Activated CD4-positive, alpha-beta T cell treated with anti-CD3 and anti-CD28 coated beads for 36 hours (primary cell): ENCODE measurements at regions of chr10 and their contacts with region 1.

Region 1: GRCh38 chr10:73810735-73811465 is 498 bp downstream of the NDST2 start:
- DNase-seq: peak; percentile 72
- ATAC-seq: peak; percentile 22
- H3K4me3 Mint-ChIP-seq: peak overlapping the region; percentile 78
- H3K27ac Mint-ChIP-seq: peak overlapping the region; percentile 91
- H3K4me1 Mint-ChIP-seq: peaks cover 42% of the 10 kb centered on the region
- H3K27me3 Mint-ChIP-seq: no peaks in the 10 kb centered on the region

Region 2: GRCh38 chr10:72875250-72876055 is 935.4 kb before region 1 on chr10:
- CTCF ChIA-PET with region 1: no interaction called
- POLR2A ChIA-PET with region 1: no interaction called
- intact Hi-C with region 1: no loop called
- DNase-seq: no peak
- ATAC-seq: peak; percentile 39
- H3K4me3 Mint-ChIP-seq: no peak overlapping the region
- H3K27ac Mint-ChIP-seq: no peak overlapping the region
- H3K4me1 Mint-ChIP-seq: no peaks in the 10 kb centered on the region
- H3K27me3 Mint-ChIP-seq: no peaks in the 10 kb centered on the region

Region 3: GRCh38 chr10:73495884-73496674 is 314.8 kb before region 1 on chr10 and contains the start of gene PPP3CB:
- CTCF ChIA-PET with region 1: no interaction called
- POLR2A ChIA-PET with region 1: no interaction called
- intact Hi-C with region 1: loop called in 1 of 2 experiments (anchors 1 kb)
- DNase-seq: peak; percentile 96
- ATAC-seq: peak; percentile 81
- H3K4me3 Mint-ChIP-seq: peak within 1 kb of the TSS; percentile 91
- H3K27ac Mint-ChIP-seq: peak within 1 kb of the TSS; percentile 99
- H3K4me1 Mint-ChIP-seq: peaks cover 45% of the 10 kb centered on the region
- H3K27me3 Mint-ChIP-seq: no peaks in the 10 kb centered on the region
- total RNA-seq, gene PPP3CB: 42.3 to 45.3 TPM

Region 4: DNA sequence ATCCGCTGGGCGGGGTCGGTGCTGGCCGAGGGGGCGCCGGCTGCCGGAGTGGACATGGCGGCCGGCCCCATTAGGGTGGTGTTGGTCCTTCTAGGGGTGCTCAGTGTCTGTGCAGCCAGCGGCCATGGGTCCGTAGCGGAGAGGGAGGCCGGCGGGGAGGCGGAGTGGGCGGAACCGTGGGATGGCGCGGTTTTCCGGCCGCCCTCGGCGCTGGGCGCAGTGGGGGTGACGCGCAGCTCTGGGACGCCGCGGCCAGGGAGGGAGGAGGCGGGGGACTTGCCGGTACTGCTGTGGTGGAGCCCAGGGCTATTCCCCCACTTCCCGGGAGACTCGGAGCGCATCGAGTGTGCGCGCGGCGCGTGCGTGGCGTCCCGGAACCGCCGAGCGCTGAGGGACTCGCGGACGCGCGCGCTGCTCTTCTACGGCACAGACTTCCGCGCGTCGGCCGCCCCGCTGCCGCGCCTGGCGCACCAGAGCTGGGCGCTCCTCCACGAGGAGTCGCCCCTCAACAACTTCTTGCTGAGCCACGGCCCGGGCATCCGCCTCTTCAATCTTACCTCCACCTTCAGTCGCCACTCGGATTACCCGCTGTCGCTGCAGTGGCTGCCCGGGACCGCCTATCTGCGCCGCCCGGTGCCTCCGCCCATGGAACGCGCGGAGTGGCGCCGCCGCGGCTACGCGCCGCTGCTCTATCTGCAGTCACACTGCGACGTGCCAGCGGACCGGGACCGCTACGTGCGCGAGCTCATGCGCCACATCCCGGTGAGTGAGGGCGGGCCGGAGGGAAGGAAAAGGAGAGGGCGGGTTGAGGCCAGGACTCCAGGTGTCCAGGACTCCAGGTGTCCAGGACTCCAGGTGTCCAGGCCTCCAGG is 38.4 kb before region 1 on chr10:
- CTCF ChIA-PET with region 1: interaction called, 7 read pairs
- POLR2A ChIA-PET with region 1: interaction called, 7 read pairs
- intact Hi-C with region 1: loop called (anchors 1 to 5 kb)
- DNase-seq: peak; percentile 89
- ATAC-seq: peak; percentile 75
- H3K4me3 Mint-ChIP-seq: peak overlapping the region; percentile 86
- H3K27ac Mint-ChIP-seq: peak overlapping the region; percentile 91
- H3K4me1 Mint-ChIP-seq: peaks cover 53% of the 10 kb centered on the region
- H3K27me3 Mint-ChIP-seq: no peaks in the 10 kb centered on the region

Region 5: DNA sequence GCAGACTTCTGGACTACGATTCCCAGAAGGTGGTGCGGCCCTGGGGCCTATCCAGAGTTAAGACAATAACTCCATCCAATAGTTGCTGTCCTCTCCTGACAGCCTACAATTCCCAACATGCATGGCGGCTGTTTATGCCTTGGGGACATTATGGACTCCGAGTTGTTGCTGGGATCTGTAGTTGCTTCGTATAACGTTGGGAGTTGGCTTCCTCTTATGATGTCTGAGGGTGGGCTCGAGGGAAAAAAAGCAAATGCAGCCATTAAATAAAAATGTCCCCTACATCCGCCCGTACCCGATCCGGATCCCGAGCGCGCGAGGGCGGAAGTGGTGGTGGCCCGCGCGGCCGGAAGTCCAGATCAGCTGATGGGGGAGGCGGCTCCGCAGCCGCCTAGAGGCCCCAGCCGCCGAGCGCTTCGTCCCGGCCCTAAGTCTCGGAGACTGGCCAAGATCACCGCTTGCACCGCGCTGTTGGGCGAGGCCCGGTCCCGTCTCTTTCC is 25.6 kb before region 1 on chr10 and contains the start of gene ZSWIM8:
- CTCF ChIA-PET with region 1: interaction called, 3 read pairs
- POLR2A ChIA-PET with region 1: interaction called, 9 read pairs
- intact Hi-C with region 1: loop called (anchors 1 kb)
- DNase-seq: peak; percentile 90
- ATAC-seq: peak; percentile 85
- H3K4me3 Mint-ChIP-seq: peak within 1 kb of the TSS; percentile 83
- H3K27ac Mint-ChIP-seq: peak within 1 kb of the TSS; percentile 98
- H3K4me1 Mint-ChIP-seq: peaks cover 46% of the 10 kb centered on the region
- H3K27me3 Mint-ChIP-seq: no peaks in the 10 kb centered on the region
- total RNA-seq, gene ZSWIM8: 40.1 to 67.3 TPM

Region 6: DNA sequence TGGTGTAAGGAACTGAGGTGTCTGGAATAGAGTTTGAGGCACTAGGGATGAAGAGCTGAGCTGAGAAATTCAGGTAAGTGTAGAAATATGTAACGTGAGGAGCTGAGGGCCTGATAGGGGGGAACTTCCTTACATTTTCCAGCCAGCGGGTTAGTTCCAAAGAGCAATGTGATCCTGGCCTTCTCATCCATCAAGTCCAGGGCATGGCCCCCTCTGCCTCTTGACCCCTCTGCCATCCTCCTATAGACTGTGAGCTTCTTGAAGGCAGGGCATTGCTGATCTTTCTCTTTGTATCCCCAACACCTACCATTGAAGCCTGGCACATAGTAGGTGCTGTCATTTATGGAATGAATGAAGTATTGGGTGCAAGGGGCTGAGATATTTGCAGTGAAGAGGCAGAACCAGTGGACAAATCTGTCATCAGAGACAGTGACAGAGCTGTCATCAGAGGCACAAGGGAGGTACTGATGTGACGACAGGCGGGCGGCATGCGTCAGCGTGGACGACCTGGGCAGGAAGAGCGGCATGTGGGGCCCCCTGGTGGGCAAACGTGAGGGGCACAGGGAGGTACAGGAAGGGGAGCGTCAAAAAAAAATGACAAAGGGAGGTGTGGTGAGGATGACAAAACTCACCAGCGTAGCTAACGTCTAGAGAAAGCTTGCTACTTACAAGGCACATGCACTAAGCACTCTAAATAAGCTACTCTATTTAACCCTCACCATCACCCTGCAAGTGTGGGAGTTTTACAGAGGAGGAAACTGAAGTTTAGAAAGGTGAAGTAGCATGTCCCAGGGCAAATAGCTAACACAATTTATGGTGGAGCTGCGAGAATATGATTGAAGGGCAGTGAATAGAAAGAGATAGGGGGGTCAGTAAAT is 68.6 kb after region 1 on chr10:
- CTCF ChIA-PET with region 1: interaction called, 7 read pairs
- POLR2A ChIA-PET with region 1: no interaction called
- intact Hi-C with region 1: loop called (anchors 1 to 2 kb)
- DNase-seq: peak; percentile 98
- ATAC-seq: peak; percentile 86
- H3K4me3 Mint-ChIP-seq: no peak overlapping the region
- H3K27ac Mint-ChIP-seq: peak overlapping the region; percentile 71
- H3K4me1 Mint-ChIP-seq: peaks cover 45% of the 10 kb centered on the region
- H3K27me3 Mint-ChIP-seq: no peaks in the 10 kb centered on the region

Region 7: GRCh38 chr10:74151056-74151878 is 340.4 kb after region 1 on chr10 and contains the start of gene ADK:
- CTCF ChIA-PET with region 1: no interaction called
- POLR2A ChIA-PET with region 1: interaction called, 3 read pairs
- intact Hi-C with region 1: loop called in 1 of 2 experiments (anchors 1 kb)
- DNase-seq: peak; percentile 100
- ATAC-seq: peak; percentile 97
- H3K4me3 Mint-ChIP-seq: no peak within 1 kb of the TSS
- H3K27ac Mint-ChIP-seq: peak within 1 kb of the TSS; percentile 85
- H3K4me1 Mint-ChIP-seq: peaks cover 45% of the 10 kb centered on the region
- H3K27me3 Mint-ChIP-seq: no peaks in the 10 kb centered on the region
- total RNA-seq, gene ADK: 53.7 to 55.0 TPM

Region 8: DNA sequence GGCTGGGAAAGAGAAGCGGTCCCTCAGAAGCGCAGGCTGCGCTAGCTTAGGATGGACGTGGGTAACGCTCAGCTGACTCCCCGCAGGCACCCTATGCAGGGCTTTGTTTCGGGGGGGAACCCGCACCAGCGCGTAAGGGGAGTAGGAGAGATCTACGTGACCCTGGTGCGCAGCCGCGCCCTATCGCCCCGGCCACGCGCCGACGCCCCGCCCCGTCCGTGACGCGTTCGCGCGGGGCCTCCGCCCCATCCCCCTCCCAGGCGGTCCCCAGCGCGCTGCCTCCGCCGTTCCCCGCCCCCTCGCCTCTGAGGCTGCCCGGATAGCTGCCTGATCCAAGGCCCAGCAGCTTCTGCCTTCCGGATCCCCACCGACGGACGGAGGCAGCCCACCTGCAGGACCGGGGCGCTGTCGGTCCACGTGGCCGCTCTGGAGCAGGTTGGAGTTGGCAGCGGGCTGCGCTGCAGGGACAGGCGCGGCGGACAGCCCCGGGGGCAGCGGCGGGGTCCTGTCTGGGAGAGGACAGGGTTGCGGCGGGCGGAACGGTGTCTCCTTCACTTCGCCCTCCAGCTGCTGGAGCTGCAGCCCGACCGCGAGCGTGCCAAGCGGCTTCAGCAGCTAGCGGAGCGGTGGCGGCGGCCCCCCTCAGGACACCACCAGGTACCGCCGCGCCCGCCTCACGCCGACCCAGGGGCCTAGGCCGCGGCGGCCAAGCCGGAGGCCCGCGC is 1399.5 kb after region 1 on chr10 and contains the start of gene VDAC2:
- CTCF ChIA-PET with region 1: no interaction called
- POLR2A ChIA-PET with region 1: no interaction called
- intact Hi-C with region 1: loop called in 1 of 2 experiments (anchors 1 kb)
- DNase-seq: peak; percentile 96
- ATAC-seq: peak; percentile 83
- H3K4me3 Mint-ChIP-seq: peak within 1 kb of the TSS; percentile 89
- H3K27ac Mint-ChIP-seq: peak within 1 kb of the TSS; percentile 100
- H3K4me1 Mint-ChIP-seq: peaks cover 40% of the 10 kb centered on the region
- H3K27me3 Mint-ChIP-seq: no peaks in the 10 kb centered on the region
- total RNA-seq, gene VDAC2: 122 to 233 TPM